Activated naive CD4-positive, alpha-beta T cell treated with anti-CD3 and anti-CD28 coated beads for 36 hours (primary cell): ENCODE measurements at regions of chr14 and their contacts with region 1.

Region 1: DNA sequence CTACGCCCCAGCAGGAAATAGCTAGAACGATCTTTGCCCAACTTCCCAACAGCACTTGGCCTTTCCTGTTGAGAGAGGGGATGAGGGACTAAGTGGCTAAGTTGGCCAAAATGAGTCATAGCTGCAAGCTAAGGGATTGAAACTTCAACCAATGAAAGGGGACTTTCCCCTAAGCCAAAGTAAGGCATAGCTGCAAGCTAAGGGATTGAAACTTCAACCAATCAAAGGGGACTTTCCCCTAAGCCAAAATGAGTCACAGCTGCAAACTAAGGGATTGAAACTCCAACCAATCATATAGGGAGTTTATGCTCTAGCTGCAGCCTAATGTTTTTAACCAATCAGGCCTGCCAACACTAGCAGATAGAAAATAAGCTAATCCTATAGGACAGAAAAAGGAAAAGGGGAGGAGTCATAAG is 100.5 kb upstream of the SSTR1 start:
- DNase-seq: peak; percentile 29
- H3K4me3 Mint-ChIP-seq: no peak overlapping the region
- H3K27ac Mint-ChIP-seq: no peak overlapping the region
- H3K4me1 Mint-ChIP-seq: peaks cover 21% of the 10 kb centered on the region
- H3K27me3 Mint-ChIP-seq: no peaks in the 10 kb centered on the region

Region 2: DNA sequence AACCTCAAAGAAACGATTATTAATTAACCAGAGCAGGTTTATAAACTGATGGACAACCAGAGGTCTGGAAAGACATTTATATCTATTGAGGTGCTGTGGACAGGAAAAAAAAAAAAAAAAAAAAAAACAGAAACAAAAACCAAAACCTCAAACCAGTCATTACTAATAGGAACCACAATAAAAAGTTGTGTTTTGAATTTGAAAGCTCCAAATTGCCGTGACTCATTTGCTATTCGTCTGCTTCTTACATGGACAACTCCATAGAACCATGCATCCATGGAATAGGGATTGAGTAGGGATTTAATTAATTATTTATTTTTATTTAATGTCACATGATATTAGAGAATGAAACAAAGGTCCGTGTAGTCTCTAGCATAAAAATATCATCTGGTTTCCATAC is 33.6 kb before region 1 on chr14:
- CTCF ChIA-PET with region 1: no interaction called
- intact Hi-C with region 1: loop called (anchors 1 kb)
- DNase-seq: no peak
- H3K4me3 Mint-ChIP-seq: no peak overlapping the region
- H3K27ac Mint-ChIP-seq: no peak overlapping the region
- H3K4me1 Mint-ChIP-seq: peaks cover 66% of the 10 kb centered on the region
- H3K27me3 Mint-ChIP-seq: no peaks in the 10 kb centered on the region

Region 3: DNA sequence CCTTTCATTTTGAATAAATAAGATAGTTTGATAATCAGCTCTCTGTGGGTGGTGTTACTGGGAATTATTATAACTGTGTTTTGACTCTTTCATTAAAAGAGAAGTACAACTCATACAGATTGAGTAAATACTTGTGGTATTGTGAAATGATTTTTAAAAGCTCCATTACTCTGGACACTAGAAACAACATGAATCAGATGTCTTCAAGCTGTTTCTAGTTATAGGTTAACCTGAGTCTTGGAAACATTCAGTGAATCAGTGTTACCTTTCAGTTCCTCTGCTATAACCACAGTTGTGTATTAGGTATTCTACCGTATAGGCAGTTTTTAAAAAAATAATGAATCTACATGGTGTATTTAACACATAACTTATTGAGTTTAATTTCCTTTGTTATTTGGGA is 28.0 kb before region 1 on chr14:
- CTCF ChIA-PET with region 1: no interaction called
- intact Hi-C with region 1: loop called (anchors 2 kb)
- DNase-seq: no peak
- H3K4me3 Mint-ChIP-seq: peak overlapping the region; percentile 9
- H3K27ac Mint-ChIP-seq: no peak overlapping the region
- H3K4me1 Mint-ChIP-seq: peaks cover 55% of the 10 kb centered on the region
- H3K27me3 Mint-ChIP-seq: no peaks in the 10 kb centered on the region

Region 4: GRCh38 chr14:38129705-38130104 is 22.5 kb after region 1 on chr14:
- CTCF ChIA-PET with region 1: no interaction called
- intact Hi-C with region 1: loop called (anchors 1 kb)
- DNase-seq: peak; percentile 73
- H3K4me3 Mint-ChIP-seq: no peak overlapping the region
- H3K27ac Mint-ChIP-seq: peak overlapping the region; percentile 77
- H3K4me1 Mint-ChIP-seq: peaks cover 35% of the 10 kb centered on the region
- H3K27me3 Mint-ChIP-seq: no peaks in the 10 kb centered on the region

Region 5: DNA sequence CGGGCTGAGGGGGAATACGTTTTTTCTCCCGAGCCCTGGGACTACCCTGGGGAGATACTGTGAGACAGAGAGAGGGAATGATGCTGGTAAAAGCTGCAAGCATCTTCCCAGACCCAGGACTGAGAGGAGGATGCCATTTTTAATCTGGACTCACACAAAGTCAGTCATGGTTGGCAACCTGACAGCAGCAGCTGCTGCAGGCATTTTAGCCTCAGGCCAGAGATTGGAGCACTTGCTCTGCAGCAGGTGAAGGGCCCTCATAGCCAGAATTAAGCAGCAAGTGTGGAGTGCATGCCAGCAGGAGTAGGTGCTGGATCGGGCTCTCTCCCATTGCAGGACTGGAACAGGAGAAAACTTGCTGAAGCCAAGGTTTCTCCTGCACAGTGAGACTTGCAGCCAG is 509.7 kb after region 1 on chr14:
- CTCF ChIA-PET with region 1: no interaction called
- intact Hi-C with region 1: no loop called
- DNase-seq: no peak
- H3K4me3 Mint-ChIP-seq: no peak overlapping the region
- H3K27ac Mint-ChIP-seq: no peak overlapping the region
- H3K4me1 Mint-ChIP-seq: no peaks in the 10 kb centered on the region
- H3K27me3 Mint-ChIP-seq: no peaks in the 10 kb centered on the region